Cardiac septum (tissue), 1 donor: ENCODE measurements at regions of chr1 and their contacts with region 1.

Region 1: GRCh38 chr1:28552758-28553663 is at the start of gene TRNAU1AP:
- DNase-seq: peak; percentile 98
- total RNA-seq, gene TRNAU1AP: 17.6 TPM

Region 2: GRCh38 chr1:27689423-27690173 is 863.4 kb before region 1 on chr1:
- intact Hi-C with region 1: no loop called
- DNase-seq: no peak

Region 3: DNA sequence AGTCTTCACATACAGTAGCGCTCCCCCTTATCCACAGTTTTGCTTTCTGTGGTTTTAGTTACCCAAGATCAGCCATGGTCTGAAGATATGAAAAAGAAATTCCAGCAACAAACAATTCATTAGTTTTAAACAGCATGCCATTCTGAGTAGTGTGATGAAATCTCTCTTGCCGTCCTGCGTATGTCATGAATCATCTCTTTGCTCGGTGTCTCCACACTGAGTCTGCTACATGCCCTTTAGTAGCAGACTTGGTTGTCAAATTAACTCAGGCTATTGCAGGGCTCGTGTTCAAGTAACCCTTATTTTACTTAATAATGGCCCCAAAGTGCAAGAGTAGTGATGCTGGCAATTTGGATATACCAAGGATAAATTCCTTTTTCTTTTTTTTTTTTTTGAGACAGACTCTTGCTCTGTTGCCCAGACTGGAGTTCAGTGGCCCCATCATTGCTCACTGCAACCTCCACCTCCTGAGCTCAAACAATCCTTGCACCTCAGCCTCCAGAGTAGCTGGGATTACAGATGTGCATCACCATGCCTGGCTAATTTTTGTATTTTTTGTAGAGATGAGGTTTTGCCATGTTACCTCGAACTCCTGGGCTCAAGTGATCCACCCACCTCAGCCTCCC is 160.9 kb before region 1 on chr1:
- intact Hi-C with region 1: no loop called
- DNase-seq: no peak

Region 4: DNA sequence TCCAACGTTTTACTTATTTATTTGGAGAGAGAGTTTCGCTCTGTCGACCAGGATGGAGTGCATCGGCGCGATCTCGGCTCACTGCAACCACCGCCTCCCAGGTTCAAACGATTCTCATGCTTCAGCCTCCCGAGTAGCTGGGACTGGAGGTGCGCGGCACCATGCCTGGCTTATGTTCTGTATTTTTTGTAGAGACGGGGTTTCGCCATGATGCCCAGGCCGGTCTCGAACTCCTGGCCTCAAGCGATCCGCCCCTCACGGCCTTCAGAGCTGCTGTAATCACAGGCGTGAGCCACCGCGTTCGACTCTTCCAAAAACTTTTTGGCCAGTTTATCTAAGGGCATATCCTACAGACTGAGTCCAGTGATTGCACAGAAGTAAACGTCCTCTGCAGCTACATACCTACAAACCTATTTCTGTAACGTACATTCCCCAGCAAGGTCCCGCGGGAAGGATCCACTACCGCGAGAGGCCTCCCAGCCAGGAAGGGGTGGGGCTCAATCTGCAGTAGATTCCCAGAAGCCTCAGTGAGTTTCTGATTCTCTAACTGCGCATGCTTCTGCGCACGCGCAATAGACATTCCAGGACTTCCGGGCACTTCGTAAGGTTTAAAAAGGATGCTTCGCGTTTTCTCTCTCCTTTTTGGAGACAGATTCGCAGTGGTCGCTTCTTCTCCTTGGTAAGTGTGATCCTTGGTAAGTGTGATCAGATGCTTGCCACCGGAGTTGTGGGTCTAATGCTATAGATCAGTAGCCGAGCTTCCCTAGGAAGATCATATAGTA is 47.4 kb before region 1 on chr1 and contains the start of gene RCC1:
- intact Hi-C with region 1: loop called (anchors 2 kb)
- DNase-seq: peak; percentile 97
- total RNA-seq, gene RCC1: 4.1 TPM

Region 5: GRCh38 chr1:28518000-28518744 is 34.8 kb before region 1 on chr1:
- intact Hi-C with region 1: loop called (anchors 1 kb)
- DNase-seq: peak; percentile 96

Region 6: DNA sequence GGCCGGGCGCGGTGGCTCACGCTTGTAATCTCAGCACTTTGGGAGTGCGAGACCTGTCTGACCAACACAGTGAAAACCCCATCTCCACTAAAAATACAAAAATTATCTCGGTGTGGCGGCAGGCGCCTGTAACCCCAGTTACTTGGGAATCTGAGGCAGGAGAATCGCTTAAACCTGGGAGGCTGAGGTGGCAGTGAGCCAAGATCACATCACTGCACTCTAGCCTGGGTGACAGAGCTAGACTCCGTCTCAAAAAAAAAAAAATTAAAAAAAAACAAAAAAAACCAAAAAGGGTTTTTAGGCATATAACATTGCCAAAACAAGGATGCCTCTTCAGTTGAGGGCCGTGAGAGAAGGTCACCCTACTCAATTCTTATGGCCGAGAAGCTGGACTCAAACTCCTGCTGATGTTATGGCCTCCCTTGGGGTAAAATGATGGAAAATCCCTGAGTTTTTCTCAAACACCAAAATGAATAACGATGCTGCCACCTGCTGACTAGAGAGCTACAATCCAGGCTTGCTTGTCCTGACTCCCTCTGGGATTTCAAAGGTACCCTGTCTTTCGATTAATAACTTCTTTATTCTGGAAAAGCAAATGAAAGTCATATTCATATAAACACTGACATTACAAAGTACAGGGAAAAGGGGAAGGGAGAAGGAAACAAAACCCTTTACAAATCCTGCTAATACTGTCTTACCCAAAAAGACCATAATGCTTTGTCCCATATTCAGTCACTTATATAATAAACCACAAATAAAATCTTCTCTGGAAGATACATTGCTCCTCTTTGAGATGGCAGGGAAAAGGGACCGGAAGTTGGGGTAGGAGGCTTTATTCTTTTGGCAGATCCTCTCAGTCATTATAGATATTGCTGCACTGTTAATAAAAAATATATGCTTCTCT is 49.8 kb after region 1 on chr1:
- intact Hi-C with region 1: no loop called
- DNase-seq: no peak